ENCODE measurements at regions of chr15 and their contacts with region 1.

Region 1: GRCh38 chr15:72958634-72959033 is 93.6 kb upstream of the NEO1 start:
- DNase-seq: no peak

Region 2: GRCh38 chr15:73009066-73010056 is 50.7 kb after region 1 on chr15:
- intact Hi-C with region 1: loop called (anchors 10 kb)
- DNase-seq: no peak

Measured in cardiac septum (tissue), 1 donor.